Activated CD8-positive, alpha-beta memory T cell treated with anti-CD3 and anti-CD28 coated beads, Interleukin-2, amount 10 ng/mL, durations not matched to agents 7 days and 5 days (primary cell): ENCODE measurements at regions of chr16 and their contacts with region 1.

Region 1: DNA sequence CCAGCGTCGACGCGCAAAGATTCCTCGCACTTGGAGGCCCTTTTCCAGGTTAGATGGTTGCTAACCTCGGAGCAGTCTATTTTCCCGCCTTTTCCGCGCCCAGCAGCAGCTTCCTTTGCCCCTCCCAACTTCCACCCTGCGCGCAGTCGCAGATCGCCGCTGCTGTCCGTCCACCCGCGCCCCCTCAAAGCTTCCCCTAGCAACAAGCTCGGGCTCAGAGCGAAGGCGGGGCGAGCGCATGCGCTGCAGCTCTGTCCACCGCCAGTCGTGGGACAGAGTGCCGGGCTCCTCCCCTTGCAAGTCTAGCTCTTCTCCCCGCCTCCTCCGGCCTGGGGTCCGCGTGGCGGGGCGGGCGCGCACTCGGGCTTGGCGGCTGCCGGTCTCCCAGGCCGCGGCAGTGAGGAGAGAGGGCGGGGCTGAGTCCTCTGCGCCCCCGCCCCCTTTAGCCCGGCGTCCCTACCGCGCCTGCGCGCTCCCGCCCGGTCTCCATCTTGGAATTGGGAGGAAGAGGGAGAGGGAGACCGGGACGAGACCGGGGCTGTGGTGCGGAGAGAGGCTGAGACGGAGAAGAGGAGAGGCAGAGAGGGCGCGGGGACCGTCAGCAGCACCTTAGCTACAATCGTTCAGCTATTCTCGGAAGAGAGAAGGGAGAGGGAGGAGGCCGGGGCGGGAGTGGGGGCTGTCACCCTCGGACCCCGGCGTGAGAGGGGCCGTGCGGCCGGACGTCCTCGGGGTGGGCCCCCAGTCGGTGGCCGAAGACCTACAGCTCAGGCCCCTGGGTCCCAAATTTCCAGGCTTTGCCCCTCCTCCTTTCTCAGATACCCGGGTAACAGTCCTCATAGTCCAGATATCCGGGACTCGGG is at the start of gene TAOK2:
- DNase-seq: peak; percentile 99
- ATAC-seq: peak; percentile 99
- H3K4me3 Mint-ChIP-seq: peak within 1 kb of the TSS; percentile 81
- H3K27ac Mint-ChIP-seq: peak within 1 kb of the TSS; percentile 95
- H3K4me1 Mint-ChIP-seq: peaks cover 30% of the 10 kb centered on the region
- H3K27me3 Mint-ChIP-seq: no peaks in the 10 kb centered on the region
- total RNA-seq, gene TAOK2: 51.1 to 55.3 TPM

Region 2: DNA sequence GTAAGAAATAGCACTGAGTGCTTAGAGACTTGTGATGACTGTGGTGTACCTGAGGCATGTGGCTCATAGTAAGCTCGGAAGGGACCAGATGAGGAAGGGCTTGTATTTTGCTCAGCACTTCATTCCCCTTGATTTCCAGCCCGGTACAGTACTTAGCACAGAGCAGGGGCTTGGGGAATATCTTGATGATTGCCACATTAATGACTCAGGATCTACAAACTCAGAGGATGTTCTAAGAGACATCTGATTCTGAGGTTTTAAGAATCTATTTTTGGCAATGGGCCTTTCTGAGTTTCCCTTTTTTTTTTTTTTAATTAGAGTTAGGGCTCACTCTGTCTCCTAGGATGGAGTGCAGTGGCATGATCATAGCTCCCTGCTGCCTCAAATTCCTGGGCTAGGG is 64.2 kb before region 1 on chr16:
- CTCF ChIA-PET with region 1: no interaction called
- DNase-seq: no peak
- ATAC-seq: no peak
- H3K4me3 Mint-ChIP-seq: no peak overlapping the region
- H3K27ac Mint-ChIP-seq: no peak overlapping the region
- H3K4me1 Mint-ChIP-seq: no peaks in the 10 kb centered on the region
- H3K27me3 Mint-ChIP-seq: no peaks in the 10 kb centered on the region

Region 3: GRCh38 chr16:29961479-29962343 is 11.9 kb before region 1 on chr16 and contains the start of gene TMEM219:
- CTCF ChIA-PET with region 1: interaction called, 31 read pairs
- DNase-seq: peak; percentile 94
- ATAC-seq: peak; percentile 95
- H3K4me3 Mint-ChIP-seq: peak within 1 kb of the TSS; percentile 88
- H3K27ac Mint-ChIP-seq: peak within 1 kb of the TSS; percentile 86
- H3K4me1 Mint-ChIP-seq: peaks cover 26% of the 10 kb centered on the region
- H3K27me3 Mint-ChIP-seq: no peaks in the 10 kb centered on the region
- total RNA-seq, gene TMEM219: 56.9 to 67.6 TPM

Region 4: GRCh38 chr16:29995911-29996772 is 22.5 kb after region 1 on chr16 and contains the start of gene INO80E:
- CTCF ChIA-PET with region 1: interaction called, 17 read pairs
- DNase-seq: peak; percentile 100
- ATAC-seq: peak; percentile 96
- H3K4me3 Mint-ChIP-seq: peak within 1 kb of the TSS; percentile 98
- H3K27ac Mint-ChIP-seq: peak within 1 kb of the TSS; percentile 99
- H3K4me1 Mint-ChIP-seq: peaks cover 34% of the 10 kb centered on the region
- H3K27me3 Mint-ChIP-seq: no peaks in the 10 kb centered on the region
- total RNA-seq, gene INO80E: 102 to 116 TPM